Heart right ventricle (tissue), 16 donors: ENCODE measurements at regions of chr18 and their contacts with region 1.

Region 1: GRCh38 chr18:63224630-63225029 is 94.9 kb downstream of the BCL2 start:
- DNase-seq: no peak
- ATAC-seq: peak in 1 of 8 donors; percentile 12
- H3K4me3 ChIP-seq: no peak overlapping the region
- H3K27ac ChIP-seq: no peak overlapping the region
- H3K4me1 ChIP-seq: peaks cover 0 to 23% (median 0%) of the 10 kb centered on the region in 9 donors
- H3K27me3 ChIP-seq: no peaks in the 10 kb centered on the region
- CTCF ChIP-seq: no peak

Region 2: GRCh38 chr18:63155169-63155852 is 69.3 kb before region 1 on chr18:
- intact Hi-C with region 1: loop called in 1 of 10 experiments (anchors 10 kb)
- DNase-seq: peak; percentile 52 to 72
- ATAC-seq: peak; percentile 69 to 90 (median 86)
- H3K4me3 ChIP-seq: peak overlapping the region in 9 of 10 donors; percentile 20 to 48 (median 38)
- H3K27ac ChIP-seq: peak overlapping the region in 1 of 10 donors; percentile 86
- H3K4me1 ChIP-seq: peaks cover under 1 to 41% (median 14%) of the 10 kb centered on the region in 9 donors
- H3K27me3 ChIP-seq: no peaks in the 10 kb centered on the region
- CTCF ChIP-seq: peak; percentile 66 to 87 (median 78)

Region 3: GRCh38 chr18:63177919-63178821 is 46.5 kb before region 1 on chr18:
- intact Hi-C with region 1: loop called in 1 of 10 experiments (anchors 5 kb)
- DNase-seq: peak; percentile 48 to 73
- ATAC-seq: peak; percentile 52 to 80 (median 63)
- H3K4me3 ChIP-seq: peak overlapping the region in 6 of 10 donors; percentile 3 to 46 (median 32)
- H3K27ac ChIP-seq: peak overlapping the region in 9 of 10 donors; percentile 9 to 85 (median 47)
- H3K4me1 ChIP-seq: peaks cover 4 to 71% (median 28%) of the 10 kb centered on the region in 9 donors
- H3K27me3 ChIP-seq: no peaks in the 10 kb centered on the region
- CTCF ChIP-seq: no peak

Region 4: GRCh38 chr18:63457987-63458386 is 233.4 kb after region 1 on chr18:
- intact Hi-C with region 1: no loop called
- DNase-seq: no peak
- ATAC-seq: no peak
- H3K4me3 ChIP-seq: no peak overlapping the region
- H3K27ac ChIP-seq: no peak overlapping the region
- H3K4me1 ChIP-seq: peaks cover 0 to 1% (median 0%) of the 10 kb centered on the region in 9 donors
- H3K27me3 ChIP-seq: peaks cover 0 to 13% (median 0%) of the 10 kb centered on the region in 7 donors
- CTCF ChIP-seq: no peak